ENCODE measurements at regions of chr11 and their contacts with region 1.

Region 1: DNA sequence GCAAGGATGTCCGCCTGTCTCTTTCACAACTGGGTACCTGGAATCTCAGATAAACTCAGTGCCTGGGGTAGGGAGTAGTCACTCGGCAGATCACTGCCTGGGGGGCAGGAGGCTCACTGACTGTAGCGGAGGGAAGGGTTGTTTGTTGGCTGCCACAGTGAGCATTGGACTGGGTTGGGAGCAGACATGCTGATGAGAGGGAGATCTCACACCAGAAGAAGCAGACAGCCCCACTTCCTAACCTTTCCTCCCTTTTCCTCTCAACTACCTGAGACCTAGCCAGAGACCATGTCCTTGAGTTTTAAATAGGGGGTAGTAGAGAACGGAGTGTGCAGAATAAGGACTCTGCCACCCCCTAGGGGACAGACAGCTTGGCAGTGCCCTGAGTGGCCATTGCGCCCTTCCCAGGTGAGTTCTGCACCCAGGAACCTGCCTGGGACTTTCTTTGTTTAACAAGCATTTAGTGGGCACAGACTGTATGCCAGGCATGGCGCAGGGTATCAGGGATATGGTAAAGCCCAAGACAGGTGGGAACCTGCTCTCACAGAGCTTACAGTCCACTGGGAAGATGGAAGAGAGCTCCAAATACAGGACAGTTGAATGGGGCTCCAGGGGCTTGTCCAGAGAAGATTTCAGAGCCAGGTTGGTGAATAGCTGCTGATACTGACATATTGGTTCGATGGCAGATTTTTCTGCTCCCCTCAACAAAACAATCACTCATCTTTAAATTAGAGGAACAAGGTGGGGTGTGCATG is 115.7 kb upstream of the NNMT start:
- DNase-seq: peak; percentile 82 to 85
- H3K4me3 ChIP-seq: peak overlapping the region in 2 of 3 donors; percentile 29 to 36
- H3K27ac ChIP-seq: peak overlapping the region; percentile 98 to 99 (median 99)
- H3K4me1 ChIP-seq: peaks cover 68 to 92% of the 10 kb centered on the region in 2 donors
- H3K27me3 ChIP-seq: no peaks in the 10 kb centered on the region
- CTCF ChIP-seq: peak; percentile 24 to 89 (median 74)
- POLR2A ChIP-seq: peak in 1 of 2 donors; percentile 66

Region 2: DNA sequence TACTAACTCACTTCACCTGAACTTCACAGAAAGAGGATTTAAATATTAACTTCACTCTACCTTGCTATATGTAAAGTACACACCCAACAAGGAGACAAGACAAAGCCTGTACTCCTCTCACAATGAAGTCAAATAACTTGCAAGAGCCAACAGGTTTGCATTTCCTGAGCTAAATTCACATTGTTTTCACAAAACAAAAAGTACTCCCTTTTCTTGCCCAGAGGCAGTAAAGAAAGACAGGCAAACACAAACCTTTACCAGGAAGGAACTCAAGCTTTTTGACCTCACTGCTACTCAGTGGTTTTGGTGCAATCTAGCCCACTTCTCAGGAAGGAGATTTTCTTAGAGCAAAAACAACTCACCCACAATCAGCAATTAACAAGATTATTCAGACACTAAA is 320.8 kb before region 1 on chr11:
- intact Hi-C with region 1: no loop called
- DNase-seq: no peak
- H3K4me3 ChIP-seq: no peak overlapping the region
- H3K27ac ChIP-seq: no peak overlapping the region
- H3K4me1 ChIP-seq: no peaks in the 10 kb centered on the region
- H3K27me3 ChIP-seq: no peaks in the 10 kb centered on the region
- CTCF ChIP-seq: no peak
- POLR2A ChIP-seq: no peak

Region 3: GRCh38 chr11:114059278-114059983 is 121.0 kb before region 1 on chr11 and contains the start of gene ZBTB16:
- intact Hi-C with region 1: loop called (anchors 5 kb)
- DNase-seq: peak; percentile 90
- H3K4me3 ChIP-seq: peak within 1 kb of the TSS; percentile 88 to 98 (median 94)
- H3K27ac ChIP-seq: peak within 1 kb of the TSS; percentile 100
- H3K4me1 ChIP-seq: peaks cover 34 to 55% of the 10 kb centered on the region in 2 donors
- H3K27me3 ChIP-seq: no peaks in the 10 kb centered on the region
- CTCF ChIP-seq: peak in 5 of 6 experiments; percentile 10 to 62 (median 31)
- POLR2A ChIP-seq: peak; percentile 57 to 98
- total RNA-seq, gene ZBTB16: 157 to 385 (median 177) TPM